ENCODE measurements at regions of chr5 and their contacts with region 1.

Region 1: DNA sequence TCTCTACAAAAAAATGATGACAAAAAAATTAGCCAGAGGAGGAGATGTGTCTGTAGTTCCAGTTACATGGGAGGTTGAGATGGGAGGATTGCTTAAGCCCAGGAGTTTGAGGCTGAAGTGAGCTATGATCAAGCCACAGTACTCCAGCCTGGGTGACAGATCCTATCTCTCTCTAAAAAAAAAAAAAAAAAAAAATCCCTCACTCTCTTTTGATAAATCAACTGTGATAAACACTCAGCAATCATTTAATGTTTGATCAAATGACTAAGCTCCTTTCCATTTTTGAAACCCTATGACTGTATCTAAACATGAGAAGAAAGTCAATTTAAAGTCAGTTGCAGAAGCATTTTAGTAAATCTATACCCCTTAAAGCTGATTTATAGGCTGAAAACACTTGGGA is 112.1 kb upstream of the IL6ST start:
- DNase-seq: no peak
- H3K4me3 ChIP-seq: no peak overlapping the region
- H3K27me3 ChIP-seq: no peaks in the 10 kb centered on the region
- CTCF ChIP-seq: no peak

Region 2: GRCh38 chr5:56148453-56148971 is 41.7 kb after region 1 on chr5:
- CTCF ChIA-PET with region 1: no interaction called
- POLR2A ChIA-PET with region 1: interaction called, 31 read pairs
- DNase-seq: no peak
- H3K4me3 ChIP-seq: no peak overlapping the region
- H3K27me3 ChIP-seq: no peaks in the 10 kb centered on the region
- CTCF ChIP-seq: no peak

Region 3: GRCh38 chr5:56259002-56259511 is 152.2 kb after region 1 on chr5:
- CTCF ChIA-PET with region 1: no interaction called
- POLR2A ChIA-PET with region 1: no interaction called
- DNase-seq: peak; percentile 96
- H3K4me3 ChIP-seq: no peak overlapping the region
- H3K27me3 ChIP-seq: no peaks in the 10 kb centered on the region
- CTCF ChIP-seq: no peak

Measured in BJ (cell line).